GM12878 (cell line): ENCODE measurements at regions of chr15 and their contacts with region 1.

Region 1: GRCh38 chr15:90320061-90320884 is 31.8 kb upstream of the ZNF774 start:
- DNase-seq: peak; percentile 45
- ATAC-seq: peak; percentile 100
- H3K4me3 ChIP-seq: no peak overlapping the region
- H3K27ac ChIP-seq: no peak overlapping the region
- H3K4me1 ChIP-seq: no peaks in the 10 kb centered on the region
- H3K27me3 ChIP-seq: no peaks in the 10 kb centered on the region
- CTCF ChIP-seq: peak; percentile 98 to 99 (median 98); a peak in 5 of 6 replicates
- EP300 ChIP-seq: no peak
- POLR2A ChIP-seq: no peak
- RAD21 ChIP-seq: peak; percentile 93

Region 2: DNA sequence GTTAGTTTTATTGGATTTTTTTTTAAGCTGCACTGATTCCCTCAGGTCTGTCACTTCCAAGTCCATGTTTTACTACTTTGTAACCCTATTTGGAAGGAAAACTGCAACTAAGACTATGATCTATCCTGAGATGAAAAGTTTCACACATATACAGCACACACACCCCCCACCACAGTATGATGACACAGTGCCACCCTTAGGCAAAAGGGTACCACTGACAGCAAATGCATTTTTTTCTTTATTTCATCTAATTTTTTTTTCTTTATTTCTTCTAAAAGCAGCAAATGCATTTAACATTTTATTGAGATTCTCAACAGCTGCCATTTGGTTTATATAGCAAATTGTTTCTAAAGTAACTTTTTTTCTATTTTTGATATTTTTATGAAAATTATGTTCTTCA is 33.6 kb before region 1 on chr15:
- CTCF ChIA-PET with region 1: interaction called, 72 read pairs
- POLR2A ChIA-PET with region 1: interaction called, 6 read pairs
- RAD21 ChIA-PET with region 1: interaction called, 5 read pairs
- SMC1A ChIA-PET with region 1: interaction called, 3 read pairs
- in situ Hi-C with region 1: no loop called
- intact Hi-C with region 1: no loop called
- DNase-seq: no peak
- ATAC-seq: peak; percentile 92
- H3K4me3 ChIP-seq: no peak overlapping the region
- H3K27ac ChIP-seq: no peak overlapping the region
- H3K4me1 ChIP-seq: no peaks in the 10 kb centered on the region
- H3K27me3 ChIP-seq: no peaks in the 10 kb centered on the region
- CTCF ChIP-seq: peak; percentile 54 to 80 (median 61); a peak in 5 of 6 replicates
- EP300 ChIP-seq: no peak
- POLR2A ChIP-seq: no peak
- RAD21 ChIP-seq: peak; percentile 90

Region 3: DNA sequence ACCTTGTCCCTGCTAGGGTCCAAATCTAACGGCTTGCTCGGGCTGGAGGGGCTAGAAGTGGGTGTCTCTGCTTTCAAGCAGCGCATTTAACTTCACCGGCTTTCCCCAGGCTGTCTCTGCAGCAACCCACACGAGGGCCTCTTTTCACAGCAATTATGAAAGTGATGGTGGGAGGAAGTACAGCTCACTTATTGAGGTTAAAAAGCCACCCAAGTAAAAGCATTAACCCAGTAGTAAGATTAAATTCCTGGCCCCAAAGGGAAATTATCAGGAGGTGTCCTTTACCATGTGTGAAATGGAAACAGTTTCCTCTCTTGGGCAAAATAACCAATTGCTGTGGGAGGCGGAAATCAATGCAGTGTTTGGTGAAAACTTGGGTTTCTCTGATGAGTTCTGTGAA is 13.7 kb before region 1 on chr15:
- CTCF ChIA-PET with region 1: interaction called, 142 read pairs
- POLR2A ChIA-PET with region 1: interaction called, 4 read pairs
- RAD21 ChIA-PET with region 1: interaction called, 23 read pairs
- SMC1A ChIA-PET with region 1: interaction called, 90 read pairs
- in situ Hi-C with region 1: no loop called
- intact Hi-C with region 1: no loop called
- DNase-seq: peak; percentile 36
- ATAC-seq: peak; percentile 96
- H3K4me3 ChIP-seq: peak overlapping the region; percentile 17; the same call in 1 of the 2 replicates
- H3K27ac ChIP-seq: peak overlapping the region; percentile 60
- H3K4me1 ChIP-seq: peaks cover 22% of the 10 kb centered on the region
- H3K27me3 ChIP-seq: no peaks in the 10 kb centered on the region
- CTCF ChIP-seq: peak in 1 of 3 experiments; percentile 37; a peak in 2 of 6 replicates
- EP300 ChIP-seq: no peak
- POLR2A ChIP-seq: 0 out of 2 replicates have a peak, but pooled peaks have one; percentile 28
- RAD21 ChIP-seq: peak; percentile 39

Region 4: DNA sequence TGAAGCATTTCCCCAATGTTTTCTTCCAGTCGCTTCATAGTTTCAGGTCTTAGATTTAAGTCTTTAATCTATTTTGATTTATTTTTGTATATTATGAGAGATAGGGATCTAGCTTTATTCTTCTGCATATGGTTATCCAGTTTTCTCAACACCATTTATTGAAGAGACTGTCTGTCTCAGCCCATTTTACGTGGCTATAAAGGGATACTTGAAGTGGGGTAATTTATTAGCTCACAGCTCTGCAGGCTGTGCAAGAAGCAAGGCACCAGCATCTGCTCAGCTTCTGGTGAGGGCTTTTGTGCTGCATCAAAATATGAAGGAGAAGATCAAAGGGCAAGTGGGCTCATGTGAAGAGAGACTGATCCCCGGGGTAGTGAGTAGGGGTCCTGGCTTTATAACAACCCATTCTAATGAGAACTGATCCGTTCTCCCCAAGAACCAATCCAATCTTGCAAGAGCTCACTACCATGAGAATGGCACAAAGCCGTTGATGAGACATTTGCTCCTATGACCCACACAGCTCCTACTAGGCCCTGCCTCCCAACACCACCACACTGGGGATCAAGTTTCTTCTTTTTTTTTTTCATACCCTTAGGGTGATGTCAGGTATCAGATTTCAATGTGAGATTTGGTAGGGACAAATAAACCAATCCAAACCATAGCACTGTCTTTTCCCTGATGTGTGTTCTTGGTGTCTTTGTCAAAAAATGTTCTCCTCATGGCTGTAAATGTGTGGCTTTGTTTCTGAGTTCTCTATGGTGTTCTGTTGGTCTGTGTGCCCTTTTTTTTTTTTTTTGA is 131.0 kb after region 1 on chr15:
- CTCF ChIA-PET with region 1: interaction called, 11 read pairs
- POLR2A ChIA-PET with region 1: no interaction called
- RAD21 ChIA-PET with region 1: no interaction called
- SMC1A ChIA-PET with region 1: interaction called, 9 read pairs
- in situ Hi-C with region 1: no loop called
- intact Hi-C with region 1: no loop called
- DNase-seq: no peak
- ATAC-seq: no peak
- H3K4me3 ChIP-seq: no peak overlapping the region
- H3K27ac ChIP-seq: no peak overlapping the region
- H3K4me1 ChIP-seq: no peaks in the 10 kb centered on the region
- H3K27me3 ChIP-seq: no peaks in the 10 kb centered on the region
- CTCF ChIP-seq: no peak
- EP300 ChIP-seq: no peak
- POLR2A ChIP-seq: no peak
- RAD21 ChIP-seq: no peak

Region 5: GRCh38 chr15:90598031-90598577 is 277.8 kb after region 1 on chr15:
- CTCF ChIA-PET with region 1: interaction called, 24 read pairs
- POLR2A ChIA-PET with region 1: interaction called, 4 read pairs
- RAD21 ChIA-PET with region 1: interaction called, 9 read pairs
- SMC1A ChIA-PET with region 1: interaction called, 12 read pairs
- in situ Hi-C with region 1: no loop called
- intact Hi-C with region 1: loop called (anchors 5 kb)
- DNase-seq: peak; percentile 46
- ATAC-seq: peak; percentile 64
- H3K4me3 ChIP-seq: peak overlapping the region; percentile 44; the same call in 1 of the 2 replicates
- H3K27ac ChIP-seq: peak overlapping the region; percentile 82
- H3K4me1 ChIP-seq: peaks cover 54% of the 10 kb centered on the region
- H3K27me3 ChIP-seq: no peaks in the 10 kb centered on the region
- CTCF ChIP-seq: peak; percentile 32 to 57 (median 44); a peak in 5 of 6 replicates
- EP300 ChIP-seq: no peak
- POLR2A ChIP-seq: peak; percentile 59
- RAD21 ChIP-seq: peak; percentile 70

Region 6: GRCh38 chr15:90691982-90692773 is 371.9 kb after region 1 on chr15:
- CTCF ChIA-PET with region 1: interaction called, 7 read pairs
- POLR2A ChIA-PET with region 1: no interaction called
- RAD21 ChIA-PET with region 1: interaction called, 9 read pairs
- SMC1A ChIA-PET with region 1: interaction called, 7 read pairs
- in situ Hi-C with region 1: no loop called
- intact Hi-C with region 1: loop called (anchors 10 kb)
- DNase-seq: peak; percentile 84
- ATAC-seq: peak; percentile 73
- H3K4me3 ChIP-seq: no peak overlapping the region
- H3K27ac ChIP-seq: peak overlapping the region; percentile 99
- H3K4me1 ChIP-seq: peaks cover 41% of the 10 kb centered on the region
- H3K27me3 ChIP-seq: no peaks in the 10 kb centered on the region
- CTCF ChIP-seq: no peak
- EP300 ChIP-seq: no peak
- POLR2A ChIP-seq: peak; percentile 68
- RAD21 ChIP-seq: peak; percentile 19; the same call in 1 of the 2 replicates